Activated naive CD4-positive, alpha-beta T cell treated with anti-CD3 and anti-CD28 coated beads, Interleukin-2, amount 10 ng/mL, durations not matched to agents 7 days and 5 days (primary cell): ENCODE measurements at regions of chr6 and their contacts with region 1.

Region 1: DNA sequence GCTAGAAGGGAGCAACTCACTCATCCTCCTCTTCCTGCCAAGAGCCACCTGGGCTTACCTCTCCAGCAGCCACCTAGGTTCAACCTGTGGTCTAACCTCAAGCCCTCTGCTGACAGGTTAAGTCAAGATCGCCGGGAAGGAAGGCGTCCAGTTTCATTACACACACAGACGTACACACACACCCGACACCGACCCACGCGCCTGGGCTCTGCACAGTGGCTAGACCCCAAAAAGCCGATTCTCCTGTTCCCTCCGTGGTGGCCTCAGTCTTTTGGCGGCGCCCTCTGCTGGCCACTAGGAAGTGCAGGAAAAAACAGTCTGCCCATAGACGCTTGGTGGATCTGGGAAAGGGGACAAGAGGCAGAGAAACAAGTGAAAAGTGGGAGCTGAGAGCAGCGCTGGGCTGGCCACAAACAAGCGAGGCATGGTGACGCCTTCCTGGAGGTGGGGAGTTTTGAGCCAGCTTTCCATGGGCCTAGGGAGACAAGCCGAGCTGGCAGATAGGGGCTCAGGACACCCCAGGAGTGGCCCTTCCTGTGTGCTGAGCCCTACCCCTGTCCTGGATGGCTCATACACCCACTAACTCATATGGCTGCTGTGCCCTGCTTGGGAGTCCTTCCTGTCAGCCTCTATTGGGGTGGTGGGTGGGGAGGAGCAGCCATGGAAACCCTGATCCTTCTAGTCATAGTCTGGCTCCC is 52.7 kb downstream of the MRPL14 start:
- DNase-seq: peak; percentile 82
- H3K4me3 Mint-ChIP-seq: peak overlapping the region; percentile 84
- H3K27ac Mint-ChIP-seq: peak overlapping the region; percentile 42
- H3K4me1 Mint-ChIP-seq: peaks cover 30% of the 10 kb centered on the region
- H3K27me3 Mint-ChIP-seq: peaks cover 70% of the 10 kb centered on the region

Region 2: GRCh38 chr6:43723737-43724295 is 350.8 kb before region 1 on chr6:
- CTCF ChIA-PET with region 1: interaction called, 22 read pairs
- DNase-seq: peak; percentile 84
- H3K4me3 Mint-ChIP-seq: no peak overlapping the region
- H3K27ac Mint-ChIP-seq: no peak overlapping the region
- H3K4me1 Mint-ChIP-seq: peaks cover 30% of the 10 kb centered on the region
- H3K27me3 Mint-ChIP-seq: peaks cover 26% of the 10 kb centered on the region

Region 3: GRCh38 chr6:43769526-43770416 is 304.8 kb before region 1 on chr6 and contains the start of gene VEGFA:
- CTCF ChIA-PET with region 1: interaction called, 69 read pairs
- DNase-seq: peak; percentile 92
- H3K4me3 Mint-ChIP-seq: peak within 1 kb of the TSS; percentile 96
- H3K27ac Mint-ChIP-seq: peak within 1 kb of the TSS; percentile 88
- H3K4me1 Mint-ChIP-seq: peaks cover 29% of the 10 kb centered on the region
- H3K27me3 Mint-ChIP-seq: peaks cover 34% of the 10 kb centered on the region

Region 4: DNA sequence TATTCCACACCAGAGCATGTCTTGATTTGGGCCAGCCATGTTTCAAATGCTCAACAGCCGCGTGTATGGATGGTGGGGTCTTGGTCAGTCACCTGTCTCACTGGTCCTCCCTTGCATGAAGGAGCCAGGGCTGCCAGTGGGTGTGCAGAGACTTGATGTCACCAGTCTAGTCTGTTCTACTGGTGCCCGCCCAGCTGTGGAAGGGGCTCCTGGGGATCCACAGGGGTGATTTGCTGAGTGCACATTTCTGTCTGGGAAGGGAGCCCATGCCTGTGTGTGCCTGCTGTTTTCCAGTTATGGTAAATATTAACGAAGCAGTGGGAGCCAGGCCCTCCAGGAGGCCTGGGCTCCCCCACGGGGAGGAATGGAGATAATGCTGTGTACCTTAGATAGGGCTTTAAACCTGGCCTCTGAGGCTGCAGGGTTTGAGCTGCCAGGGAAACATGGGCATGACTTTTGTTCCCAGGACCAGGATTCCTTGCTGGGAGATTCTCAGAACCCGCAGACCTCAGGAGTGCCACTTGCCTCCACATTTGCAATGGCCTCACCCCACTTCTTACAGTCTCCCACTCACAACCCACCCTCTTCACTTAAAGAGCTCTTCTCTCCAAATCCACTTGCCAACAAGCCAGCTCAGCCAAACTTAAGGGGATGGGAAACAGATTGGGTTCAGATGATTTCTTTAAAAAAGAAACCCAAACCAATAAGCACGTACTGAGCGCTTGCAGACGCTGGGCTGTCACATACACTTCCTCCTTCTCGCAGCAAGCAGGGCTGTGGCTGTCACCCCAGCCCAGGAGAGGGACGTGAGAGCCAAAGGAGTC is 250.5 kb before region 1 on chr6:
- CTCF ChIA-PET with region 1: no interaction called
- DNase-seq: no peak
- H3K4me3 Mint-ChIP-seq: no peak overlapping the region
- H3K27ac Mint-ChIP-seq: no peak overlapping the region
- H3K4me1 Mint-ChIP-seq: peaks cover 4% of the 10 kb centered on the region
- H3K27me3 Mint-ChIP-seq: peaks cover 30% of the 10 kb centered on the region

Region 5: GRCh38 chr6:44064089-44064947 is 10.3 kb before region 1 on chr6:
- CTCF ChIA-PET with region 1: interaction called, 33 read pairs
- DNase-seq: no peak
- H3K4me3 Mint-ChIP-seq: no peak overlapping the region
- H3K27ac Mint-ChIP-seq: no peak overlapping the region
- H3K4me1 Mint-ChIP-seq: no peaks in the 10 kb centered on the region
- H3K27me3 Mint-ChIP-seq: peaks cover 45% of the 10 kb centered on the region